Head of caudate nucleus (tissue), 42 donors: ENCODE measurements at regions of chr1 and their contacts with region 1.

Region 1: GRCh38 chr1:25819576-25820246 is at the start of gene MTFR1L:
- DNase-seq: peak; percentile 68 to 96 (median 91)

Region 2: GRCh38 chr1:25239681-25240541 is 579.8 kb before region 1 on chr1:
- intact Hi-C with region 1: loop called (anchors 10 kb)
- DNase-seq: peak; percentile 81 to 95 (median 89)

Region 3: GRCh38 chr1:25520446-25521061 is 299.2 kb before region 1 on chr1:
- intact Hi-C with region 1: loop called (anchors 10 kb)
- DNase-seq: peak; percentile 59 to 93 (median 80)

Region 4: GRCh38 chr1:25997828-25998761 is 178.4 kb after region 1 on chr1 and contains the start of gene PAFAH2:
- intact Hi-C with region 1: loop called (anchors 5 kb)
- DNase-seq: peak; percentile 93 to 99 (median 97)

Region 5: GRCh38 chr1:26072305-26072704 is 252.6 kb after region 1 on chr1:
- intact Hi-C with region 1: no loop called
- DNase-seq: peak in 5 of 42 donors; percentile 14 to 83 (median 56)